ENCODE measurements at regions of chr2 and their contacts with region 1.

Region 1: DNA sequence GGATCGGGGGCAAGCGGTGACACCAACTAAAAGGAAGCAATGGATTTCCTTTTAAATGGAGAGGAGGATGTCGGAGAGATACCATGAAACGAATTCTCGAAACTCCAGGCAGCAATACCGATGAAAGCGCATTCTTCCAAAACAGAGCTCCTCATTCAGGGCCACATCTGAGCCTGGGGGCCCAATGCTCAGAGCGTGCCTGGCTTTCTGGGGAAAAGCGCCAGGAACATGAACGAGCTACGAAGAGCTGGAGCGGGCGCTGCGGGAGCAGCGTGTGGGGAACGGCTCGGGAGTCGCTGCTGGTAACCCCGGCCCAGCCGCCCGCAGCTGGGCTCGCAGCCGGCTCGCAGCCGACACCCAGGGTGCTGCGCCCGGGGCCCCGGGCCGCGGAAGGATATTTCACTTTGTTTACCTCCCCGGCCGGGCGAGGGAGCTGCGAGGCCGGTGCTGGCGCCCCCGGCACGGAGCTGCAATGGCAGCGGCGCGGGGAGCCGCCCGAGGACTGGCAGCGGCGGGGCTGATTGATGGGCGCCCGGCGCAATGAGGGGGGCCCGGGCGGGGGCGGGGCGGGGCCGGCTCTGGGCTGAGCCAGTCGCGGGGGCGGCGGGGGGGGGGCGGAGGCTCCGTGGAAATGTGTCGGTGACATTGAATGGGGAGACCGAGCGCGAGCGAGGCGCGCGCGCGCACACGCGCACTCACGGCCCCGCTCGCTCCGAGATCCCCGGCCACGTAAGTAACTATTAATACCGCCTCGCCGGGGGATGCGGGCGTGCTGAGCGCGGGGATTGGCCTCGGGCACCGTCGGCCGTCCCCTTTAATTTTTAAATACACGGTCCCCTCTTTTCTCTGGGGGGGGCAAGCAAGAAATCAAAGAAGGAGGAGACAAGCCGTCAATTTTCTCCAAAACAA is at the start of gene TRIB2:
- DNase-seq: peak; percentile 93
- CTCF ChIP-seq: peak; percentile 25

Region 2: DNA sequence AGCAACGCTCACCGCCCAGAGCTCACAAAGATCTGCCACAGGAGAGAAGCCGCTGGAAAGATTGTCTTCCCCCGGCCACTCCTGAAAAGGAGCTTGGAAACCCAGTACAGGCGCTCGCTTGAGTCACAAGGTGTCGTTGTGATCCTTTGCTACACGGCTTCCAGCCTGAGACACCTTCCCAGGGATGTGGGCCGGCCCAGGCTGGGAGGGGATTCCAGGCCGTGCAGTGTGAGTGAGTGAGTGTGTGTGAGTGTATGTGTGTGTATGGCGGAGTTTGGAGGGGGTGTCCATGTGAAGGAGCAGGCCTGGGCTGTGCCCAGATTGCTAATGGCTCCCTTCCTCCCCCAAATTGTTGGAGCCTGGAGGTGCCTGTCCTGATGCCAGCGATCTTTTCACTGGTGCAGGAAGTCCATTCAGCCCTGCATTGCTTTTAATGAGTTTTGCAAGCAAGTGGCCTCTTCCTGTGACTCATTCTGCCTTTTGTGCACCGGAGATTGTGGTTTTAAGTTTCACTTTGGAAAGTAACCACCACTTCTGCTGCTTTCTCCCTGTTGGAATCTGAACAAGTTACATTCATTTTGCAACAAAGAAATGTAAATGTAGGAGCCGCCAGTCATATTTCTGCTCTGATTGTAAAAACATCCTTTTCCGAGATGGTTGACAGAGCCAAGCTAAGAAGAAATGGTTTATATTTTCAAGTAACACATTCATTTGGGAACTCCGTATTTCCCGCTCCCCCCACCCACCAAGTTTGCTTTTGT is 886.4 kb before region 1 on chr2:
- in situ Hi-C with region 1: loop called (anchors 25 kb)
- DNase-seq: peak; percentile 74
- CTCF ChIP-seq: peak; percentile 19

Region 3: GRCh38 chr2:12429779-12430406 is 286.6 kb before region 1 on chr2:
- in situ Hi-C with region 1: loop called (anchors 10 kb)
- DNase-seq: no peak
- CTCF ChIP-seq: no peak

Region 4: GRCh38 chr2:12990523-12990922 is 274.0 kb after region 1 on chr2:
- in situ Hi-C with region 1: no loop called
- DNase-seq: no peak
- CTCF ChIP-seq: no peak